Caco-2 (cell line): ENCODE measurements at regions of chr20 and their contacts with region 1.

Region 1: DNA sequence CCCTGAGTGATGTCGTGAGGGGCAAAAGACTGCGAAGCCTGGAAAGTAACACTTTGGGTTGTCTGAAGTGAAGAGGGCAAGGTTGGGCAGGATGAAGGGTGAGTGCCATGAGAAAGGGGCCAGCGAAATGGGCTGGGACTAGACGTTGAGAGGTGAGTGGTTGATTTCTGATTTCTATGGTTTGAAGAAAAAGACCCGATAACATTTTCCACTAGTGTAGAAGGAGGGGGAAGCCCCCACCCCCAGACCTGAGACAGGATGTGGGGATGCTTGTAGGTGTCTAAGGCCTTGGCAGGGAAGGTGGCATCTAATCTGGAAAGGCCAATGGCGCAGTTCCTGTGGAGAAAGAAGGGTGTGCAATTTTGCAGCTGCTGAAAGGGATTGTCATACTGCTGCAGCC is 25.3 kb upstream of the KIF3B start:
- DNase-seq: no peak
- H3K4me3 ChIP-seq: no peak overlapping the region
- H3K4me3 Mint-ChIP-seq: no peak overlapping the region
- H3K27ac Mint-ChIP-seq: peak overlapping the region; percentile 19
- H3K4me1 ChIP-seq: peaks cover 22% of the 10 kb centered on the region
- H3K4me1 Mint-ChIP-seq: peaks cover 11% of the 10 kb centered on the region
- H3K27me3 ChIP-seq: no peaks in the 10 kb centered on the region
- H3K27me3 Mint-ChIP-seq: no peaks in the 10 kb centered on the region
- CTCF ChIP-seq: no peak

Region 2: DNA sequence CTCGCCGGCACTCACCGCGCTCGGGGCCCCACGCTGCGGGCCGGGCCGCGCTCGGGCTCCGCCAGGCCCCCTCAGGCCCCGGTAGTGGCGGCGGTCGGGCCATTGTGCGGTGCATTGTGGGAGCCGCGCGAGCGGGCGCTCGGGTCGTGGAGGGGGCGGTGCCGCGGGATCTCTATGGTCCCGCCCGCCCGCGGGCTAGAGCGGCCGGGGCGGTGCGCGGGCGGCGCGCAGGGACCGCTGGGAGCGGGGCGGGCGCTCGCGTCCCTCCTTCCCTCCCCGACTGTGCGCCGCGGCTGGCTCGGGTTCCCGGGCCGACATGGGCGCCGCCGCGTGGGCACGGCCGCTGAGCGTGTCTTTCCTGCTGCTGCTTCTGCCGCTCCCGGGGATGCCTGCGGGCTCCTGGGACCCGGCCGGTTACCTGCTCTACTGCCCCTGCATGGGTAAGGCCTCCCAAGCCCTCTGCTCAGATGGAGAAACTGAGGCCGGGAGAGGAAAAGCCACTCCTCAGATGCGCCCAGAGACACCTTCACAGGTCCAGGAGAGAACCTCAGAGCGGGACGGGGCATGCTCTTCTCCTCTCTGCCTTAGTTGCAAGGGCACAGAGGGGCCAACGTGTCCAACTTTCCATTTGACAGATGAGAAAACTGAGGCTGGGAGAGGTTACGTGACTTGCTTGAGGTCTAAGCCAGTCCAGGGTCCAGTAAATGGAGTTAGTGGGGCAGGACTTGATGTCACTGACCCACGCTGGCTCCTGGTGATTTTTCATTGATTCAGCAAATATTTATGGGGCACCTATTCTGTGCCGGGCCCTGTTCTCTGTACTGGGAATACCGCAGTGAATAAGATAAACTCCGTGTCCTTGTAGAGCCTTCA is 44.3 kb before region 1 on chr20 and contains the starts of genes PLAGL2 and POFUT1:
- CTCF ChIA-PET with region 1: no interaction called
- POLR2A ChIA-PET with region 1: no interaction called
- intact Hi-C with region 1: loop called (anchors 2 kb)
- DNase-seq: peak; percentile 95 to 100
- H3K4me3 ChIP-seq: peak within 1 kb of the TSS; percentile 72
- H3K4me3 Mint-ChIP-seq: peak within 1 kb of the TSS; percentile 92
- H3K27ac Mint-ChIP-seq: peak within 1 kb of the TSS; percentile 89
- H3K4me1 ChIP-seq: peaks cover 46% of the 10 kb centered on the region
- H3K4me1 Mint-ChIP-seq: peaks cover 71% of the 10 kb centered on the region
- H3K27me3 ChIP-seq: no peaks in the 10 kb centered on the region
- H3K27me3 Mint-ChIP-seq: no peaks in the 10 kb centered on the region
- CTCF ChIP-seq: peak; percentile 9 to 55
- total RNA-seq, gene PLAGL2: 89.6 and 96.1 TPM in 2 replicates
- total RNA-seq, gene POFUT1: 148 and 158 TPM in 2 replicates

Region 3: DNA sequence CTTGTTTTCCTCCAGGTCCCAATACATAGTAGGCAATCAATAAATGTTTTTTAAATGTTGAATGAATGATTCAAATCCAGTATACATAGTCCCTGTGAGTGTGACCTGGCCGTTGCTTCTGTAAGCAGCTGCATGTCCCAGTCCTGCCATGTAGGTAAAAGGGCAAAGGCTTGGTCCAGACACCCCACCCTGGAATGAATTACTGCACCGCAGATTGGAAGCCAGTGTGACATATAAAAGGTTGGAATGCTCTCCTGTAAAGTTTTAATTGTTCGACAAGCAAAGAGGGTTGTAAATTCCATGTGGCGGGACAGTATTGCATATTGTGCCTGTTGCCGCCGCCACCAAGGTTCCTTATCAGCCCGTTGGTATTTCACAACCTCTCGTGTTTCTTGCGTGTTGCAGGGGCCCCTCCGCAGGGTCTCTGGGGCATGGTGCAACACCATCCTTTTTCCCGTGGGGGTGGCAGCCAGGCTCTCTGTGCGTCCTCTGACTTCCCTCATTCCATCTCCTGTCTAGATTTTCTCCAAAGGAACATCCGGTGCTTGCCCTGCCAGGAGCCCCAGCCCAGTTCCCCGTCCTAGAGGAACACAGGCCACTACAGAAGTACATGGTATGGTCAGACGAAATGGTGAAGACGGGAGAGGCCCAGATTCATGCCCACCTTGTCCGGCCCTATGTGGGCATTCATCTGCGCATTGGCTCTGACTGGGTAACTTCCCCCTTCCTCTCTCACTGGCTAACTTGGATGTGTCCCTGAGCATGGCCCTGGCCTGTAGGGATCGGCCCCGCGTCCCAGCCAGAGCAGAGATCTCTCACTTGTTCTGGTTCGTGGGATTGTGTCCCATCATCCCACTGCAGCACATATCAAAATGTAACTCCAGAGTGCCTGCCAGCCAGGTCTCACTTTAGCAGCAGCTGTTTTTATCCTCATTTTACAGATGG is 24.2 kb before region 1 on chr20:
- CTCF ChIA-PET with region 1: interaction called, 3 read pairs
- POLR2A ChIA-PET with region 1: interaction called, 6 read pairs
- intact Hi-C with region 1: loop called (anchors 1 kb)
- DNase-seq: peak; percentile 100
- H3K4me3 ChIP-seq: no peak overlapping the region
- H3K4me3 Mint-ChIP-seq: peak overlapping the region; percentile 59
- H3K27ac Mint-ChIP-seq: peak overlapping the region; percentile 99
- H3K4me1 ChIP-seq: peaks cover 57% of the 10 kb centered on the region
- H3K4me1 Mint-ChIP-seq: peaks cover 71% of the 10 kb centered on the region
- H3K27me3 ChIP-seq: no peaks in the 10 kb centered on the region
- H3K27me3 Mint-ChIP-seq: no peaks in the 10 kb centered on the region
- CTCF ChIP-seq: no peak

Region 4: DNA sequence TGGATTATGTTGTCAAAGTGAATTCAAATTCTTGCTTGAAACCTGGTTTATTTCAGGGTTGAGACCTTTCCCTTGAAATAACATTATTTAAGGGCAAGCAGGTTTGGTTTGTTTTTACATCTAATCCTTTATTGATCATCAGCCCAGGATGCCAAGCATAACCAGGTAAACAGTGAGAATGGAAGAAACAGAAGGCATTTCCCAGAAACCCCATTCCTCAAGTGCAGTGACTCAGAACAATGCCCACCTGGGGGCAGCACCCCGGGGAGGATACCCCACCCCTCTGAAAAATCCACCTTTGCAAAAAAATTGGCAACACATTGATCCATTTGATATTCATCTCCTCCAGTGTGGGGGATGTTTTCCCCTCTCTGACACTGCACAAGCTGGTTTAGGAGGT is 12.0 kb before region 1 on chr20:
- CTCF ChIA-PET with region 1: interaction called, 3 read pairs
- POLR2A ChIA-PET with region 1: no interaction called
- intact Hi-C with region 1: loop called (anchors 1 kb)
- DNase-seq: peak in 1 of 2 experiments; percentile 68
- H3K4me3 ChIP-seq: no peak overlapping the region
- H3K4me3 Mint-ChIP-seq: no peak overlapping the region
- H3K27ac Mint-ChIP-seq: no peak overlapping the region
- H3K4me1 ChIP-seq: peaks cover 32% of the 10 kb centered on the region
- H3K4me1 Mint-ChIP-seq: peaks cover 31% of the 10 kb centered on the region
- H3K27me3 ChIP-seq: no peaks in the 10 kb centered on the region
- H3K27me3 Mint-ChIP-seq: no peaks in the 10 kb centered on the region
- CTCF ChIP-seq: peak; percentile 53 to 76

Region 5: GRCh38 chr20:32263398-32263954 is 11.3 kb after region 1 on chr20:
- CTCF ChIA-PET with region 1: no interaction called
- POLR2A ChIA-PET with region 1: no interaction called
- intact Hi-C with region 1: no loop called
- DNase-seq: no peak
- H3K4me3 ChIP-seq: no peak overlapping the region
- H3K4me3 Mint-ChIP-seq: no peak overlapping the region
- H3K27ac Mint-ChIP-seq: no peak overlapping the region
- H3K4me1 ChIP-seq: no peaks in the 10 kb centered on the region
- H3K4me1 Mint-ChIP-seq: peaks cover 7% of the 10 kb centered on the region
- H3K27me3 ChIP-seq: no peaks in the 10 kb centered on the region
- H3K27me3 Mint-ChIP-seq: no peaks in the 10 kb centered on the region
- CTCF ChIP-seq: no peak

Region 6: DNA sequence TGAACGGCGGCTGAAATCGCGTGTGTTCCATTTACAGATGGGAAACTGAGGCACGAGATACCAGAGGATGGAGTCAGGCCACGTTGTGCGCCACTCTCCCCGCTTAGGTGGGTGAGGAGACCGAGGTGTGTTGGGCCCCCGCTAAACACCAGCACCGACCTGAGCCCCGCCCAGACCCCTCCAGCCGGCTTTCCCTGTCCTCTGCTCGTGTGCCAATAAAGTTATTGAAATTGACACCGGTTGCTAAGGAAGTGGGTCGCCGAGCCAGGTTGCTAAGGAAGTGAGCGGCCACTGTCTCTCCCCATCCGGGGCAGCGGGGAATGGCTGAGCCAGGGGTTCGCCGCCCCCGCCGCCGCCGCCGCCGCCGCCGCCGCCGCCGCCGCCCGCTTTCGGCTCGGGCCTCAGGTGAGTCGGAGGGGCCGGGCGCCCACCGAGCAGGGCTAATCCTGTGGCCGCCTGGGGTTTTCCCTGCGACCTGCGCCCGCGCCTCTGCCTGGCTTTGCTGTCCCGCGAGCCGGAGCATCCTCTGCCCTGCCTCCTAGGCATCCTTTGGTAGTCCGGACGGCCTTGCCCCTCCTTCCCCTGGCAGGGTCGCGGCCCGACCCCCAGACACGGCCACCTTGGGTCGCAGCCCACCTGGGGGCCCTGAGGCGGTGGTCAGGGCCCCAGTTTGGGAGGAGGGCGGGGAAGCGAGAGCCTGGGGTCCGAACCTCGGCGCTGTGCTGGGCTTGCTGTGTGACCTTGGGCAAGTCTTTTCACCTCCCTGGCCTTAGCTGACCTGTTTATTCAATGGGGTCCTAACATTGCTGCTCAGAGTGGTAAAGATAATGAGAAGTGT is 25.4 kb after region 1 on chr20 and contains the start of gene KIF3B:
- CTCF ChIA-PET with region 1: no interaction called
- POLR2A ChIA-PET with region 1: no interaction called
- intact Hi-C with region 1: loop called (anchors 2 kb)
- DNase-seq: peak; percentile 97 to 98
- H3K4me3 ChIP-seq: peak within 1 kb of the TSS; percentile 84
- H3K4me3 Mint-ChIP-seq: peak within 1 kb of the TSS; percentile 90
- H3K27ac Mint-ChIP-seq: peak within 1 kb of the TSS; percentile 88
- H3K4me1 ChIP-seq: peaks cover 16% of the 10 kb centered on the region
- H3K4me1 Mint-ChIP-seq: peaks cover 20% of the 10 kb centered on the region
- H3K27me3 ChIP-seq: no peaks in the 10 kb centered on the region
- H3K27me3 Mint-ChIP-seq: no peaks in the 10 kb centered on the region
- CTCF ChIP-seq: no peak
- total RNA-seq, gene KIF3B: 49.0 and 50.0 TPM in 2 replicates

Region 7: DNA sequence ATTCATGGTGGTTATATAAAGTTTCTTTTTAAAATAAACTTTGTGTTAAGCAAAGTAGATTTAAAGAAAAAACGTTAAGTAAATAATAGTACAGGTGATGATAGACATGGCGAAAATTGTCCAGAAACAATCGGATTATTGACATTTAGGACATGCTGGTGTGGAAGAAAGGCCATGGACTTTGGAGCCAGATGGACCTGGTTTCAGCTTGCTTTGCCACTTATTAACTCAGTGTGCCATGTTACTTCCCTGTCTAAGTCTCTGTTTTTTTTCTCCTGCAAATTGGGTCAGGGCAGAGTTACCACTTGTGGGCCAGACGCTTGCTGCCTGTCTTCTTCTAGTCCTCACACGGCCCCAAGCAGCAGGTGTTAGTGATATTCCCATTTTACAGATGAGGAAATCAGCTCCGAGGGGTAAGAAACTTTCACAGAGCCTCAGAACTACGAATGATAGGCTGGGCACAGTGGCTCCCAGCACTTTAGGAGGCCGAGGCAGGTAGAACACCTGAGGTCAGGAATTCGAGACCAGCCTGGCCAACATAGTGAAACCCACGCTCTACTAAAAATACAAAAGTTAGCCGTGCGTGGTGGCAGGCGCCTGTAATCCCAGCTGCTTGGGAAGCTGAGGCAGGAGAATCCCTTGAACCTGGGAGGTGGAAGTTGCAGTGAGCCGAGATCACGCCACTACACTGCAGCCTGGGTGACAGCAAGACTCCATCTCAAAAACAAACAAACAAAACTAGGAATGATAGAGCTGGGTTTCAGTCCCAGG is 37.7 kb after region 1 on chr20:
- CTCF ChIA-PET with region 1: interaction called, 4 read pairs
- POLR2A ChIA-PET with region 1: no interaction called
- intact Hi-C with region 1: loop called (anchors 1 kb)
- DNase-seq: peak; percentile 90 to 94
- H3K4me3 ChIP-seq: no peak overlapping the region
- H3K4me3 Mint-ChIP-seq: peak overlapping the region; percentile 54
- H3K27ac Mint-ChIP-seq: peak overlapping the region; percentile 81
- H3K4me1 ChIP-seq: peaks cover 52% of the 10 kb centered on the region
- H3K4me1 Mint-ChIP-seq: peaks cover 36% of the 10 kb centered on the region
- H3K27me3 ChIP-seq: no peaks in the 10 kb centered on the region
- H3K27me3 Mint-ChIP-seq: no peaks in the 10 kb centered on the region
- CTCF ChIP-seq: no peak

Region 8: GRCh38 chr20:32325706-32326503 is 73.7 kb after region 1 on chr20:
- CTCF ChIA-PET with region 1: no interaction called
- POLR2A ChIA-PET with region 1: no interaction called
- intact Hi-C with region 1: loop called (anchors 1 kb)
- DNase-seq: peak; percentile 79 to 85
- H3K4me3 ChIP-seq: no peak overlapping the region
- H3K4me3 Mint-ChIP-seq: peak overlapping the region; percentile 41
- H3K27ac Mint-ChIP-seq: peak overlapping the region; percentile 78
- H3K4me1 ChIP-seq: peaks cover 45% of the 10 kb centered on the region
- H3K4me1 Mint-ChIP-seq: peaks cover 21% of the 10 kb centered on the region
- H3K27me3 ChIP-seq: no peaks in the 10 kb centered on the region
- H3K27me3 Mint-ChIP-seq: no peaks in the 10 kb centered on the region
- CTCF ChIP-seq: no peak